Activated T-helper 2 cell treated with anti-CD3 and anti-CD28 coated beads, Interferon-gamma antibody, Interleukin-2, Interleukin-4, amounts not matched to agents 10 μg/mL and 5 μg/mL and 100 μg/mL, durations not matched to agents 14 hours and 24 hours and 36 hours (primary cell): ENCODE measurements at regions of chr13 and their contacts with region 1.

Region 1: GRCh38 chr13:44648392-44649103 is 72.4 kb upstream of the TSC22D1 start:
- DNase-seq: no peak
- H3K4me3 Mint-ChIP-seq: no peak overlapping the region
- H3K27ac Mint-ChIP-seq: peak overlapping the region; percentile 25
- H3K4me1 Mint-ChIP-seq: peaks cover 21% of the 10 kb centered on the region
- H3K27me3 Mint-ChIP-seq: peaks cover 14% of the 10 kb centered on the region

Region 2: GRCh38 chr13:44710576-44710975 is 62.0 kb after region 1 on chr13:
- intact Hi-C with region 1: loop called (anchors 1 kb)
- DNase-seq: no peak
- H3K4me3 Mint-ChIP-seq: no peak overlapping the region
- H3K27ac Mint-ChIP-seq: no peak overlapping the region
- H3K4me1 Mint-ChIP-seq: peaks cover 8% of the 10 kb centered on the region
- H3K27me3 Mint-ChIP-seq: peaks cover 15% of the 10 kb centered on the region

Region 3: DNA sequence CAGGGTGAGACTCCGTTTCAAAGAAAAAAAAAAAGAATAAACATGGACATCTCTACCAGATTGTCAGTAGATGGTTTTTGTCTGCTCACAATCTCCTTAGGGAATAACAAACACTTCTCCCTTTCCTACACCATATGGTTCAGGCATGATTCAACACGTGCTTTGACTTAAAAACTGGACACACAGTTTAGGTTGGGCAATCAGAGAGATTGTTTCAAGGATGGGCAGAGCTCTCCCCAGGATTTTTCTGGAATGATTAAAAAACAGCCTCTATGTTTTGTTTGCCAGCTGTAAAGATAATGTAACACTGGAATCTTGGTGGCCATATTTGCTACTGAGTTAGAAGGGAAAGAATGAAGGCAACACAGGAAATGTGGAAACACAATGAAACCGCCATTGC is 77.7 kb after region 1 on chr13:
- intact Hi-C with region 1: no loop called
- DNase-seq: no peak
- H3K4me3 Mint-ChIP-seq: no peak overlapping the region
- H3K27ac Mint-ChIP-seq: no peak overlapping the region
- H3K4me1 Mint-ChIP-seq: no peaks in the 10 kb centered on the region
- H3K27me3 Mint-ChIP-seq: no peaks in the 10 kb centered on the region

Region 4: DNA sequence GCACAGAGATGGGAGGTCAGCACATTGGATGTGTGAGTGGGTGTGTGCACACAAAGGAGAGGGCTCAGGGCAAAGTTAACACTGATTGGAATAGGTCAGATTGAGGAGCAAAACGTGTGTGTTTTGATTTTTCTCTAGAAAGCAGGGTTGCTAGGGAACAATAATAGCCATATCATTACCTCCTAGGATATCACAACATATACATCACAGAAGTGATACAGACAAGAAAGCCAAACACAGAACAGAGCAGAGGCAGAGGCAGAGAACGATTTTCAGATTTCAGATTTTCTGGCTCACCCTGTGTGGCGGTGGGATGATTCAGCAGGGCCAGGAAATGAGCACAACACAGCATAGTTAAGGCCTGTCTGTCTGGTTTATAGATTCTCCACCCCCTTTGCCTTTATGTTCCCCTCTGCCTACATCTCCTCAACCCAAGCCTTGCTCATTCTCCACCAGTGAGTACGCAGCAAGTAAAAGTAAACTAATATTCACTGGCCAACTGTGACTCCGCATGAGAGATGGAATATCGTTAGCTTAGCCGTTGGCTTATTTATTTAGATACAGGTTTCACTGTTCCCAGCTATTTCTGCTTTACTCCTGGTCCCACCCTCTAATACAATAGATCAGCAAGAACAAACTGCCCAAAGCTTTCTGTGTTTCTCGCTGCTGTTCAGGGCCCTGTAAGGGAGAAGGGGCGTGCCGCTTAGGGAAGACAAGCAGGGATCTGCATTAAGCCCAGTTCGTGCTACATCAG is 110.3 kb after region 1 on chr13:
- intact Hi-C with region 1: loop called (anchors 2 kb)
- DNase-seq: no peak
- H3K4me3 Mint-ChIP-seq: no peak overlapping the region
- H3K27ac Mint-ChIP-seq: peak overlapping the region; percentile 13
- H3K4me1 Mint-ChIP-seq: peaks cover 22% of the 10 kb centered on the region
- H3K27me3 Mint-ChIP-seq: peaks cover 2% of the 10 kb centered on the region

Region 5: DNA sequence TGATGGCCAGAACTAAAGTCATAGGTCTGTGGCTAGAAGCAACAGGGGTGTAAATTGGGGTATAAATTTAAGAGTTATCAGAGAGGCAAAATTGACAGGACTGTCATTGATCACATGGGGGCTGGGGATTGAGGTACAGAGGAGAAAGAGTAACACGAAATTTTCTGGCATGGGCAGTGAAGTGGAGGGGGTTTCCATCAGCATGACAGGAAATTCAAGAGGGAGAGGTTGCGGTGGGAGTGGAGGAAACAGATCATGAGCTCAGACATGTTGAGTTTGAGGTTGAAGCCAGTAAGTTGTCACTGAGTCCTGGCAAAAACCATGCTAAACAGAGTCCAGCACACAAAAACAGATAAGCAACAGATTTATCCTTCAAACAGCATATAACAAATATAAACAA is 119.7 kb after region 1 on chr13:
- intact Hi-C with region 1: loop called (anchors 1 kb)
- DNase-seq: peak; percentile 16
- H3K4me3 Mint-ChIP-seq: no peak overlapping the region
- H3K27ac Mint-ChIP-seq: peak overlapping the region; percentile 52
- H3K4me1 Mint-ChIP-seq: peaks cover 27% of the 10 kb centered on the region
- H3K27me3 Mint-ChIP-seq: peaks cover 6% of the 10 kb centered on the region

Region 6: DNA sequence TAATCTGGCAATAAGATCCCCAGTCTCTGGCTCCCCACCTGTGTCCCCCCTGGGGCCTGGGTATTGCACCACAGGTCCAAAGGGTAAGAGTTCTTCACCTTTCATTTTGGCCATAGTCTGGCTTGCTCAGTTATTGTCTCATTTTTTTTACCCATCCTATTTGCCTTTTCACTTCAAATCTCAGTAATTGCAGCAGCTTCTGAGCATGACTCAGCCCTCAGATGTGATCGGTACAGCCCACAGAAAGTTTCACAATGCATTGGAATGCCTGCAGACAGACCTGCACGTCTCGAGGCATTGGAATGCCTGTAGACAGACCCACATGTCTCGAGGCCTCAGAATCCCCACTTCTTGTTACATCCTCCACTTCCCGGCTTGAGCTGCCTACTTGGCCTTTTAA is 167.1 kb after region 1 on chr13:
- intact Hi-C with region 1: loop called (anchors 2 kb)
- DNase-seq: peak; percentile 10
- H3K4me3 Mint-ChIP-seq: no peak overlapping the region
- H3K27ac Mint-ChIP-seq: no peak overlapping the region
- H3K4me1 Mint-ChIP-seq: peaks cover 26% of the 10 kb centered on the region
- H3K27me3 Mint-ChIP-seq: peaks cover 45% of the 10 kb centered on the region